Activated CD4-positive, alpha-beta memory T cell treated with anti-CD3 and anti-CD28 coated beads for 36 hours (primary cell): ENCODE measurements at regions of chr6 and their contacts with region 1.

Region 1: GRCh38 chr6:169212897-169213813 is 40.5 kb downstream of the THBS2 start:
- DNase-seq: peak; percentile 93
- H3K4me3 Mint-ChIP-seq: peak overlapping the region; percentile 51
- H3K27ac Mint-ChIP-seq: peak overlapping the region; percentile 55
- H3K4me1 Mint-ChIP-seq: peaks cover 9% of the 10 kb centered on the region
- H3K27me3 Mint-ChIP-seq: no peaks in the 10 kb centered on the region

Region 2: GRCh38 chr6:169529931-169530751 is 317.0 kb after region 1 on chr6:
- CTCF ChIA-PET with region 1: no interaction called
- POLR2A ChIA-PET with region 1: no interaction called
- intact Hi-C with region 1: loop called (anchors 10 kb)
- DNase-seq: peak; percentile 40
- H3K4me3 Mint-ChIP-seq: no peak overlapping the region
- H3K27ac Mint-ChIP-seq: peak overlapping the region; percentile 14
- H3K4me1 Mint-ChIP-seq: peaks cover 13% of the 10 kb centered on the region
- H3K27me3 Mint-ChIP-seq: no peaks in the 10 kb centered on the region